Caco-2 (cell line): ENCODE measurements at regions of chr3 and their contacts with region 1.

Region 1: DNA sequence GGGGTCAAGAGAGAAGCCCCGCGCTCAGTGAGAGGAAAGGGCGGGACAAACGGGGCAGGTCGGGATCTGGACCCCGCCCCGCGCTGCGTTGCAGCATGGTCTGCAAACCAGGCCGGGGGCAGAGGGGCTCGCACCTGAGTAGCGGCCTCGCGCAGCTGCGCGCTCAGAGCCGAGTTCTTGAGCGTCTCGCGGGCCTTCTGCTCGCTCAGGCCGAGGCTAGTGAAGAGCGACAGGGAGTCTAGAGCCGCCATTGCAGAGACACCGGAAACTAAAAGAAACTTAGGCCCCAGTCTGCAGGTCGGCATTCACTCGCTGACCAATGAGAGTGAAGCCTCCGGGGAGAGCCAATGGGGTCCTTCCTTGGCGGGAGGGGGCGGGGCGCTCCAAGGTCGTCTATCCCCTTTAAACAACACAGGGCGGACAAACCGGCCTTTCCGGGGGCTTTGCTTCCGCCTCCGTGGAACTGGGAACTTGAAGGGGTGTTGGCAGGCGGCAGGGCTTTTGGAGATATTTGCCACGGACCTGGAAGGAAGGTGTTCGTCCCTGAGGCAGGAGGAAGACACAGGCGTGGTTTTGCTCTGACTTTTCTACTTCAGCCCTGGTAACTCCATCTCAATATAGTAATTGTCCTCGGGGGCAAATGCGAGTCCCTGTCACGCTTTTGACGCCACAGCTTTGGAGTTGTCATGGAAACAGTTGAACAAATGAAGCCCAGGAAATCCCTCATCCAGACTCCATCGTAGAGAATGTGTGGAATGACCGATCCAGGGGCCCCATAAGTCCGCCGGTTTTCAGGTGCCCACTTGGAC is at the start of gene QARS1:
- DNase-seq: peak; percentile 95 to 96
- H3K4me3 ChIP-seq: peak within 1 kb of the TSS; percentile 80
- H3K4me3 Mint-ChIP-seq: peak within 1 kb of the TSS; percentile 96
- H3K27ac Mint-ChIP-seq: peak within 1 kb of the TSS; percentile 98
- H3K4me1 ChIP-seq: no peaks in the 10 kb centered on the region; the same call in 1 of the 2 replicates
- H3K4me1 Mint-ChIP-seq: peaks cover 7% of the 10 kb centered on the region
- H3K27me3 ChIP-seq: no peaks in the 10 kb centered on the region
- H3K27me3 Mint-ChIP-seq: no peaks in the 10 kb centered on the region
- CTCF ChIP-seq: no peak
- total RNA-seq, gene QARS1: 361 and 386 TPM in 2 replicates

Region 2: DNA sequence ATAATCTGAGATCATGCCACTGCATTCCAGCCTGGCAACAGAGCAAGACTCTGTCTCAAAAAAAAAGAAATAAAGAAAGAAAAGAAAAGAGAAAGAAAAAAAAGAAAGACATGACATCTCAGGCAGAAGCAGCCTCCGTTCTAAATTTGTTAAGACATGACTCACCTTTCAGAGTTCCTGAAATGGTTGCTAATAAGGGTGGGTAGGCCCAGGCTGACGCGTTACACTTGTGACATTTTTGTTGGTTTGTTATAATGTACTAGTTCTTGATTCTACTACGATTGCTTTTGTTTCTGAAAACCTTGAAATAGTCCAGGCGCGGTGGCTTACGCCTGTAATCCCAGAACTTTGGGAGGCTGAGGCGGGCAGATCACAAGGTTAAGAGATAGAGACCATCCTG is 227.0 kb before region 1 on chr3:
- CTCF ChIA-PET with region 1: no interaction called
- POLR2A ChIA-PET with region 1: no interaction called
- intact Hi-C with region 1: no loop called
- DNase-seq: no peak
- H3K4me3 ChIP-seq: no peak overlapping the region
- H3K4me3 Mint-ChIP-seq: no peak overlapping the region
- H3K27ac Mint-ChIP-seq: no peak overlapping the region
- H3K4me1 ChIP-seq: no peaks in the 10 kb centered on the region
- H3K4me1 Mint-ChIP-seq: no peaks in the 10 kb centered on the region
- H3K27me3 ChIP-seq: no peaks in the 10 kb centered on the region
- H3K27me3 Mint-ChIP-seq: no peaks in the 10 kb centered on the region
- CTCF ChIP-seq: no peak

Region 3: GRCh38 chr3:48999085-48999858 is 105.4 kb before region 1 on chr3:
- CTCF ChIA-PET with region 1: no interaction called
- POLR2A ChIA-PET with region 1: no interaction called
- intact Hi-C with region 1: no loop called
- DNase-seq: no peak
- H3K4me3 ChIP-seq: no peak overlapping the region
- H3K4me3 Mint-ChIP-seq: no peak overlapping the region
- H3K27ac Mint-ChIP-seq: no peak overlapping the region
- H3K4me1 ChIP-seq: peaks cover 5% of the 10 kb centered on the region
- H3K4me1 Mint-ChIP-seq: no peaks in the 10 kb centered on the region
- H3K27me3 ChIP-seq: no peaks in the 10 kb centered on the region
- H3K27me3 Mint-ChIP-seq: no peaks in the 10 kb centered on the region
- CTCF ChIP-seq: no peak

Region 4: DNA sequence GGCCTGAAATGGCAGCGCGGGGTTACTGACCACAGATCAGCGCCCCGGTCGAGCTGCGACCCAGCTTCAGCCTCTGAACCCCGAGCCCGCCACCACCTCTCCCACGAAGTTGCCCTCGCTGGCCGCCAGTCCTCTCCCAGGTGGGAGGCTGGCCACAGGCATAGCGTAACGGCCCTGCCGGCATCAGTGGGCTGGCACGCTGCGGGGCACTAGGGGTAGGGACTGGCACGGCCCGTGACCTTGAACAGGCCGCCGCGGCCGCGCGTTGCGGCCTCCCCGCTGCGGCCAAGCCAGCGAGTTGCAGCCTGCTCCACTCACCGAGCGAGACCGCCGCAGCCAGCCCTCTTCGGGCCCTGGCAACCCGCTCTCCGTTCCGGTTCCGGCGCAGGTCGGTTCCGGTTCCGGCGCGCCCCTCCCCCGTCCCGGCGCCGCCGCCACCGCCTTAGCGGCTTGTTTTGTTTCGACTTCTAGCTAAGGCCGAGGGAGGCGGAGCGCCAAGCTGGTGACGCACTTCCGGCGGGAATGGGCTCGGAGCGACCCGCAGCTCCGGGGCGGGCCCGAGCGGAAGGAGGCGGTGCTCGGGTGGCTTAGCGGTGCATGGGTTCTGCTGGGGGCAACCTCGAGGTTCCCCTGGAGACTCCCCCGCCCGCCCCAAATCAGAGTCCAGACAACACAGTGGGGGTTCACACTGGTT is 15.9 kb after region 1 on chr3 and contains the start of gene USP19:
- CTCF ChIA-PET with region 1: no interaction called
- POLR2A ChIA-PET with region 1: interaction called, 8 read pairs
- intact Hi-C with region 1: loop called (anchors 1 kb)
- DNase-seq: peak; percentile 89 to 91
- H3K4me3 ChIP-seq: peak within 1 kb of the TSS; percentile 90
- H3K4me3 Mint-ChIP-seq: peak within 1 kb of the TSS; percentile 79
- H3K27ac Mint-ChIP-seq: peak within 1 kb of the TSS; percentile 66
- H3K4me1 ChIP-seq: peaks cover 9% of the 10 kb centered on the region; the same call in 1 of the 2 replicates
- H3K4me1 Mint-ChIP-seq: no peaks in the 10 kb centered on the region
- H3K27me3 ChIP-seq: no peaks in the 10 kb centered on the region
- H3K27me3 Mint-ChIP-seq: no peaks in the 10 kb centered on the region
- CTCF ChIP-seq: no peak
- total RNA-seq, gene USP19: 55.9 and 56.4 TPM in 2 replicates

Region 5: GRCh38 chr3:49171119-49171774 is 66.6 kb after region 1 on chr3 and contains the start of gene KLHDC8B:
- CTCF ChIA-PET with region 1: no interaction called
- POLR2A ChIA-PET with region 1: no interaction called
- intact Hi-C with region 1: no loop called
- DNase-seq: peak; percentile 88 to 90
- H3K4me3 ChIP-seq: peak within 1 kb of the TSS; percentile 70
- H3K4me3 Mint-ChIP-seq: peak within 1 kb of the TSS; percentile 88
- H3K27ac Mint-ChIP-seq: peak within 1 kb of the TSS; percentile 63
- H3K4me1 ChIP-seq: peaks cover 11% of the 10 kb centered on the region
- H3K4me1 Mint-ChIP-seq: peaks cover 7% of the 10 kb centered on the region
- H3K27me3 ChIP-seq: no peaks in the 10 kb centered on the region
- H3K27me3 Mint-ChIP-seq: no peaks in the 10 kb centered on the region
- CTCF ChIP-seq: peak; percentile 93
- total RNA-seq, gene KLHDC8B: 7.4 and 8.8 TPM in 2 replicates

Region 6: DNA sequence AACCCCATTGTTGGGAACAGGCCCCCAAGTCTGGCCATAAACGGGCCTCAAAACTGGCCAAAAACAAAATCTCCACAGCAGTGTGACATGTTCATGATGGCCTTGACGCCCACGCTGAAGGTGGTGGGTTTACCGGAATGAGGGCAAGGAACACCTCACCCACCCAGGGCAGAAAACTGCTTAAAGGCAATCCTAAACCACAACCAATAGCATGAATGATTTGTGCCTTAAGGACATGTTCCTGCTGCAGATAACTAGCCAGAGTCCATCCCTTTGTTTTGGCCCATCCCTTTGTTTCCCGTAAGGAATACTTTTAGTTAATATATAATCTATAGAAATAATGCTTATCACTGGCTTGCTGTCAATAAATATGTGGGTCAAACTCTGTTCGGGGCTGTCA is 114.4 kb after region 1 on chr3:
- CTCF ChIA-PET with region 1: no interaction called
- POLR2A ChIA-PET with region 1: no interaction called
- intact Hi-C with region 1: no loop called
- DNase-seq: no peak
- H3K4me3 ChIP-seq: no peak overlapping the region
- H3K4me3 Mint-ChIP-seq: no peak overlapping the region
- H3K27ac Mint-ChIP-seq: no peak overlapping the region
- H3K4me1 ChIP-seq: peaks cover 6% of the 10 kb centered on the region; the same call in 1 of the 2 replicates
- H3K4me1 Mint-ChIP-seq: peaks cover 7% of the 10 kb centered on the region
- H3K27me3 ChIP-seq: no peaks in the 10 kb centered on the region
- H3K27me3 Mint-ChIP-seq: no peaks in the 10 kb centered on the region
- CTCF ChIP-seq: no peak